Activated T-helper 1 cell treated with anti-CD3 and anti-CD28 coated beads, Interleukin-12 subunit alpha, Interleukin-12 subunit beta, Interleukin-2, Interleukin-4 antibody, amounts not matched to agents 30 ng/mL and 10 ng/mL and 1 ng/mL, durations not matched to agents 14 hours and 24 hours and 36 hours (primary cell): ENCODE measurements at regions of chr11 and their contacts with region 1.

Region 1: DNA sequence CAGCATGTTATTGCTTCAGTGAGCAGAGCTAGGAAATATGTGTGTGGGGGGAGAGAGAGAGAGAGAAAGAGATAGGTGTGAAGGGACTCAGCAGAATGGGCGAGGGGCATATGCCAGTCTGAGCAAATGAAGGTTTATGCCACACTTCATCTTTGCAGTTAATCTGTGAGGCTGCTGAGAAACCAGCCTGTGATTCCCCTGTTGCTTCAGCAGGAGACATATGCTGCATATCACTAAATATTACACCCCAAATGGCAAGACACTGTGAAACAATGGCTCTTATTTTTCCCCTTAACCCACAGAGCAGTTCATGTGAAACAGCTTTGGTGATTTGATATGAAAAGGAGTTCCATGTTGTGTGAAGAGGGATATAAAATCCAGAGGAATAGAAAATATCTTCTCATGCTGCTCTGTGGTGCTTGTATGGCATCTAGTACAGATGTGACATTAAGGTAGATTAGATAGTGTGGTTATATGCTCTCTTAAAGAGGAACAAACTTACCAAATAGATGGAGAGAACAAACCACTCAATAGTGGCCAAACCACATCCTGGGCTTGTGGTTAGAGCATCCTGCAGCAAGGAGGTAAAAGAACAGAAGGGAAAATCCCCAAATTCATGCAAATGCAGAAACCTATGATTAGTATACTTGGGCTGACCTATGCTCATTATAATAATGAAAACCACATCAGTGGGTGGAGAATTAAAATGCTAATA is 864.2 kb downstream of the FAM181B start:
- DNase-seq: peak; percentile 87
- H3K4me3 Mint-ChIP-seq: peak overlapping the region; percentile 72
- H3K27ac Mint-ChIP-seq: peak overlapping the region; percentile 80
- H3K4me1 Mint-ChIP-seq: peaks cover 39% of the 10 kb centered on the region
- H3K27me3 Mint-ChIP-seq: peaks cover 7% of the 10 kb centered on the region

Region 2: DNA sequence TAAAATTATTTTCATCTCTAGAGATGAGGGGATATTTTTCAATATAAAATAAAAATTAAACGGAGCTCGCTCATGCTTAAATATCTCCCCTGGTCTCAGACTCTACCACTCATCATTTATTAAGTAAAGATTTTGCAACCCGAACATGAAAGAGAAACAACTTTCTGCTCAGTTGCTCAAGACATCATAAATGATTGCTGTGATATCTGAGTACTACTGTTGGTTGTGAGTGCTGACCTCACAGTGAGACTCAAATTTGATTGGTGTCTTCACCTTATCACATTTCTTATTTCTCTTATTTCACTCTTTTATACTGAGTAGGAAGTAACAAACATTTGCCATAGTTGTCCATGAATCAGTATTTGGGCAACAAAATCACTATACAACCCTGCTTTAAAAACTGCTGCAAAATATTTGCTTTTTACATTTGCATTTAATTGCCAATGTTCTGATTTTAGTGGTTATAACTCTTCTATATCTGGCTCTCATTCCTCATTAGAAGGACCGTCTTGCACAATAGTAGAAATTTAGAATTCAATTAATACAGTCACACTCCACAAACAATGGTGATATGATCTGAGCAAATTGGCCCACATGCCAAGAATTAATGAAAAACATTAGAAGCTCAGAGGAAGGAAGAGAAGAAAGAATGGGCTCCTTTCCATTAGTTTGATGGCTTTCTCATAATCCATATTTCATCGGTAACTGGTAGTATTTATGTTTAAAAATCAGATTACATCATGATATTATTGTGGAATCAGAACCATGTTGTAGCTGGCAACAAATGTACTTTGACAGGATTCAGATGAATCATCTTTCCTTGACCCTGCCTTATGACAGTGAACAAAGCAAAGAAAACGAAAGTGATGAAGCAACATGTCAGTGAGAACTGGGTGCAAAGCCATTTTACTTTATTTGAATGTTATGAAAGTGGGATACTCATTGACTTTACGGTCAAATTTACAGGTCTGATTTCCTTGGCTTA is 1455.0 kb before region 1 on chr11:
- intact Hi-C with region 1: no loop called
- DNase-seq: no peak
- H3K4me3 Mint-ChIP-seq: no peak overlapping the region
- H3K27ac Mint-ChIP-seq: no peak overlapping the region
- H3K4me1 Mint-ChIP-seq: no peaks in the 10 kb centered on the region
- H3K27me3 Mint-ChIP-seq: no peaks in the 10 kb centered on the region

Region 3: DNA sequence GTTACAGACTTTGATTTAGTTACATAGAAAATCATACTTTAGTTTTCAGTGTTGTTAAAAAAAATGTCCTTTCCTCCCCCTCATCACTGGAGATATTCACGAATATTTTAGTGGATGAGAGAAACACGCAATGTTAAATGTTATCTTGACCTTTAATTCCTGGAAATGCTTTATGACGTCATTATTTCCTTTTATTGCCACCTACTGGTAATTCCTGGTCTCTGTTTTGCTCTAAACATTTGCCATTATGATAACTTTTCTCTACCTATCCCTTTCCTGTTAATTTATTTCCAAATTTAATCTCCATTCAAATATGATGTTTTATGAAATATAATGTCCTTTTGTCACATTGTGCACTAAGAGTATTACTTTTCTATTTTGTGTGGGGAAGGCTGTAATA is 93.5 kb after region 1 on chr11:
- intact Hi-C with region 1: loop called (anchors 1 kb)
- DNase-seq: no peak
- H3K4me3 Mint-ChIP-seq: no peak overlapping the region
- H3K27ac Mint-ChIP-seq: no peak overlapping the region
- H3K4me1 Mint-ChIP-seq: peaks cover 12% of the 10 kb centered on the region
- H3K27me3 Mint-ChIP-seq: no peaks in the 10 kb centered on the region

Region 4: GRCh38 chr11:82523141-82523540 is 653.6 kb after region 1 on chr11:
- intact Hi-C with region 1: no loop called
- DNase-seq: no peak
- H3K4me3 Mint-ChIP-seq: no peak overlapping the region
- H3K27ac Mint-ChIP-seq: no peak overlapping the region
- H3K4me1 Mint-ChIP-seq: no peaks in the 10 kb centered on the region
- H3K27me3 Mint-ChIP-seq: peaks cover 2% of the 10 kb centered on the region

Region 5: DNA sequence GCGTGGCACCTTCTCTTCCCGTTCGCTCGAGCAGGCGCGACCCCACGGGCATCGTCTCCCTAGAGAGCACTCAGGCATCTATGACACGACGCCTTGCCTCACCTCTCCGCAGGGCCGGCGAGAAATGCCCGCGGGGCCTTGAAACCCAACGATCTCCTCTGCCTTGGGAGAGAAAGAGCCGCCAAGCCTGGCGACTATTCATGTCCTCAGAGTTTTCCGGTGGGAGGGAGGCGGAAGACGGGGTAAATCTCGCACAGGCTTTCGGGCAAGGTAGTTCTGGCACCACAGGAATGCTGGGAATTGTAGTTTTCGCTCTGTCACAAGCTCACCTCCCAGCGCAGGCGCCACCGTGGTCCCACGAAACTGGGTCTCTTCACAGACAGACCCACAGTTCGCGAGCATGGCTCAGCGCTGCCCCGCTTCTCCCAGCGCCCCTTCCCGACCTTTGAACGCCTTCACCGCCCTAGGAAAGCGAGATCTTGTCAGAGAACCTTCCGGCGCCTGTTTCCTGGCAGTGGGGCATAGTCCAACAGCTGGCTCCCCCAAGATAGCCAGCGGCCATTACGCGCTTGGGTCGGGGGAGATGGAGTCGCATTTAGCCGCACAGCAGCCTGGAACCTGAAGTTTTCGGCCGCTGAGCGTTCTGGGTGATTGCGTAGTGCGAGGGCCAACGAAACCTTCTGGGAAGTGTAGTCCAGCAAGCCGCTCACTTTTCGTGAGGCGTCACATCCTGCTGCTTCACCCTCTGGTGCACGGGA is 1416.4 kb after region 1 on chr11 and contains the start of gene CCDC90B:
- intact Hi-C with region 1: loop called (anchors 10 kb)
- DNase-seq: peak; percentile 91
- H3K4me3 Mint-ChIP-seq: peak within 1 kb of the TSS; percentile 96
- H3K27ac Mint-ChIP-seq: peak within 1 kb of the TSS; percentile 95
- H3K4me1 Mint-ChIP-seq: peaks cover 21% of the 10 kb centered on the region
- H3K27me3 Mint-ChIP-seq: peaks cover 4% of the 10 kb centered on the region
- total RNA-seq, gene CCDC90B: 24.2 and 24.5 TPM in 2 replicates